ENCODE measurements at regions of chr6 and their contacts with region 1.

Region 1: DNA sequence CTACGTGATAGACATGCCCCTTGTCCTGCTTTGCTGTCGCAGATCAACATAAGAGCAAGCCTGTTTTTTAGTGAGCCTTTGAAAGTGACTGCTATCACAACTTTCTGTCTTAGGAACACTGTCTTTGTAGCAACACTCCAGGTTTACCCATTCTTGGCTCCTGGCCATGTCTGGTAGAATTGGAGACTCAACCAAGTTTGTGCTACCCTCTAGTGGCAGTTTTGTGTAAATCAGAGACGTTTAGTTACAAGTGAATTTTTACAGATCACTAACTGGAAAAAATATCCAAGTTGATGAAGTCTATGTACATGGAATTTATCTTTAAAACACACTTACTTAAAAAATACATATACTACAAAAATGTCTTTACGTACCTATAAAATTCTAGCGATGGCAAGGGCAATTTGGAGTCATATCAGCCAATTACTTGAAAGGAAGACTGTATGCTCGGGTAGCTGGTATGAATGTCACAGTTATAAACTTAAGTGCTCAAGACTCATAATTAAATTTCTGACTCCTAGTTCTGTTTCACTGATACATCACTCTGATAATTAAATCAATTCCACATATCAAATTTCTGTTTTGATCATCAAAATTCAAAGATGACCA is 101.4 kb downstream of the ADGB start:
- DNase-seq: no peak
- ATAC-seq: no peak
- H3K4me3 Mint-ChIP-seq: no peak overlapping the region
- H3K27ac Mint-ChIP-seq: no peak overlapping the region
- H3K4me1 Mint-ChIP-seq: no peaks in the 10 kb centered on the region
- H3K27me3 Mint-ChIP-seq: no peaks in the 10 kb centered on the region
- CTCF ChIP-seq: no peak

Region 2: GRCh38 chr6:145929037-145929633 is 771.0 kb before region 1 on chr6:
- CTCF ChIA-PET with region 1: interaction called, 12 read pairs
- POLR2A ChIA-PET with region 1: no interaction called
- intact Hi-C with region 1: loop called (anchors 1 kb)
- DNase-seq: no peak
- ATAC-seq: no peak
- H3K4me3 Mint-ChIP-seq: no peak overlapping the region
- H3K27ac Mint-ChIP-seq: no peak overlapping the region
- H3K4me1 Mint-ChIP-seq: no peaks in the 10 kb centered on the region
- H3K27me3 Mint-ChIP-seq: no peaks in the 10 kb centered on the region
- CTCF ChIP-seq: peak; percentile 88